ENCODE measurements at regions of chr1 and their contacts with region 1.

Region 1: DNA sequence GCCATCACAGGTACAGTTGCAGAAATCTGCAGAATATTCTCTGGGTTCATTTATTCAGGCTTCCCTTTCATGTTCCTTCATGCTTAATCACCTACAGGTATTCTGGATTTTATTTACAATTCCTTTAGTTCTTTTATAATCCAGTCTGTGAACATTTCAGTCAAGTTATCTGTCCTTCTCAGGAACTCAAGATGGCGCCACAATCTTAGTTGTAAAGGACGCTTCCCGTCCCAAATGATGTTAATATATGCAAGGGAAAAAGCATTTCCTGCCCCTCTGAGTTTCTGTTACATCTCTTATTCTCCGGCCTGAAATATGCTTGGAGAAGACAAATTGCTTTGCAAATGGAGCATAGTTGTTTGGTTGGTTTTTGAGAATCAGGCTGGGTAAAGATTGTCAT is 19.3 kb downstream of the F3 start:
- DNase-seq: no peak
- ATAC-seq: peak; percentile 63

Region 2: GRCh38 chr1:94602316-94602715 is 80.0 kb after region 1 on chr1:
- intact Hi-C with region 1: loop called (anchors 10 kb)
- DNase-seq: no peak
- ATAC-seq: no peak

Region 3: GRCh38 chr1:94805912-94806311 is 283.6 kb after region 1 on chr1:
- intact Hi-C with region 1: loop called (anchors 2 kb)
- DNase-seq: peak; percentile 44
- ATAC-seq: peak; percentile 33